Dorsolateral prefrontal cortex (tissue), 120 donors: ENCODE measurements at regions of chr14 and their contacts with region 1.

Region 1: DNA sequence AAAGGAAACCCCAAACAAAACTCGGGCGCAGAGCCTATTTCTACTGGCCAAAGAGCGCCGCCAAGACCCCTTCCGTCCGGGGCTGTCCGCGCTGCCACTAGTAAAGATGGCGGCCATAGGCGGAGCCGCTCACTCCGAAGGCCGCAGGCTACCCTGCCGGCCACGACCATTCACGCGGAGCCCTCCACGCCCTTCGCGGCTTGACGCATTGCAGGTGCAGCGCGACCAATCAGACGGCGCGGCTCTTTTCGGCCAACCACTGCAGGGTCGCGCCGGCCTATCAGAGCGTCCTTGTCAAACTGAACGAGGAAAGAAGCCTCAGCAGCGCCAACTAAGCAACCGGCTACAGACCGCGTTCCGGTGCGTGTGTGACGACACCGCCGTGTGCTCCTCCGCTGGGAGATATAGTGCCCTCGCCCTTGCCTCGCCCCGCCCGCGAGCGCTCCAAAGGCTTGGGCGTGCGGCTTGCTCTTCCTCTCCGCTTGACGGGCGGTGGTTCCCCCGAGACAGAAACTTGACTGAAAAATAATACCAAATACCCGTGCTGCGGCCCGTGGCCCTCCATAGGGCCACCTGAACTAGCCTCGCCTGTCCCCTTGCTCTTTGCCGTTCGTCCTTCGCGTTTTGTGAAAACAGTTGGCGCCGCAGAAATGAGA is 13.6 kb upstream of the CALM1 start:
- DNase-seq: peak; percentile 99 to 100 (median 100)
- H3K4me3 ChIP-seq: peak overlapping the region; percentile 48 to 85 (median 71)
- H3K27ac ChIP-seq: peak overlapping the region; percentile 98 to 100 (median 100)
- H3K27me3 ChIP-seq: no peaks in the 10 kb centered on the region
- CTCF ChIP-seq: peak in 53 of 56 donors; percentile 2 to 64 (median 37)

Region 2: DNA sequence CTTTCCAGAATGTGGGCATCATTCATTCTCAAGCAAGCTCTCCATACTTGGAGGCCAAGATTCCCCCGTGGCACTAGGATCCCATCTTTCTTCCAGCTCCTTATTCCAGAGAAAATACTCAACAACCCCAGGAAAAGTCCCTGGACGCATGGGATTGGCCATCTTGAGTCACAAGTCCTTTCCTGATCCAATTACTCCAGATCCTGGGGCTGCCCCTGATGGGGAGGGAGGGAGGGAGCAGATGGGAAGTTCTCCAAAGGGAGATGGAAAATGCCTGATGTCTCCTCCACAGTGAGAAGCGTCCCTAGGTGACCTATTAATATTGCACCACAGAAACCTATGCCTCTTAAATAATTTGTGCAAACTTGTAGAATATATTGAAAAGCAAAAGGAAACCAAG is 333.8 kb before region 1 on chr14:
- intact Hi-C with region 1: no loop called
- DNase-seq: no peak
- H3K4me3 ChIP-seq: no peak overlapping the region
- H3K27ac ChIP-seq: no peak overlapping the region
- H3K27me3 ChIP-seq: peaks cover 0 to 15% (median 0%) of the 10 kb centered on the region in 45 donors
- CTCF ChIP-seq: no peak

Region 3: GRCh38 chr14:90331497-90332435 is 51.4 kb before region 1 on chr14 and contains the start of gene NRDE2:
- intact Hi-C with region 1: loop called (anchors 5 kb)
- DNase-seq: peak; percentile 97 to 99 (median 97)
- H3K4me3 ChIP-seq: peak within 1 kb of the TSS; percentile 61 to 99 (median 80)
- H3K27ac ChIP-seq: peak within 1 kb of the TSS; percentile 76 to 97 (median 91)
- H3K27me3 ChIP-seq: no peaks in the 10 kb centered on the region
- CTCF ChIP-seq: peak in 38 of 56 donors; percentile 6 to 58 (median 32)
- total RNA-seq, gene NRDE2: 16.4 to 42.6 (median 27.7) TPM